WTC11 (cell line): ENCODE measurements at regions of chr17 and their contacts with region 1.

Region 1: DNA sequence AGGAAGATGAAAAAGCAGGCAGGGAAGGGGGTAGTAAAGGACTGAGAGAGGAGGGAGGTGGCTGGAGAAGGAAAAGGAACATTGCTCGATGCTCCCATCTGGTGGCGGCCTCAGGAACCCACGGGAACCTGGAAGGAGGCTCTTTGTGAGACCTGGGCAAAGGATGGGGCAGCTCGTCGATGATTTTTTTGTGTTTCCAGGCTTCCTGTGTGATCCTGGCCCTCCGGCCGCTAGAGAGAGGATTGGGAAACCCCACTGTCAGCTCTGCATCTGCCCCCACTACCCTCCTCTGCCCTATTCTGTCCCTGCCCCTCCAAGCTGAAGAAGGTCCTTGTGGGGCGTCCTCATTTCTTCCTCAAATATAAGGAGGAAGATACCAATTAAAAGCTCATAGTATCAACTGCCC is 6.6 kb downstream of the WFIKKN2 start:
- DNase-seq: peak; percentile 83
- ATAC-seq: peak; percentile 90
- H3K4me3 Mint-ChIP-seq: no peak overlapping the region
- H3K27ac Mint-ChIP-seq: no peak overlapping the region
- H3K4me1 Mint-ChIP-seq: peaks cover 9% of the 10 kb centered on the region
- H3K27me3 Mint-ChIP-seq: no peaks in the 10 kb centered on the region
- CTCF ChIP-seq: 0 out of 2 replicates have a peak, but pooled peaks have one; percentile 44

Region 2: GRCh38 chr17:50765454-50766221 is 76.3 kb before region 1 on chr17:
- CTCF ChIA-PET with region 1: interaction called, 13 read pairs
- POLR2A ChIA-PET with region 1: no interaction called
- DNase-seq: no peak
- ATAC-seq: no peak
- H3K4me3 Mint-ChIP-seq: no peak overlapping the region
- H3K27ac Mint-ChIP-seq: peak overlapping the region; percentile 33; the same call in 1 of the 2 replicates
- H3K4me1 Mint-ChIP-seq: peaks cover 16% of the 10 kb centered on the region
- H3K27me3 Mint-ChIP-seq: no peaks in the 10 kb centered on the region; the same call in 1 of the 2 replicates
- CTCF ChIP-seq: no peak

Region 3: GRCh38 chr17:50806141-50806643 is 35.8 kb before region 1 on chr17:
- CTCF ChIA-PET with region 1: interaction called, 27 read pairs
- POLR2A ChIA-PET with region 1: no interaction called
- DNase-seq: peak; percentile 56
- ATAC-seq: peak; percentile 81
- H3K4me3 Mint-ChIP-seq: no peak overlapping the region
- H3K27ac Mint-ChIP-seq: no peak overlapping the region
- H3K4me1 Mint-ChIP-seq: no peaks in the 10 kb centered on the region
- H3K27me3 Mint-ChIP-seq: no peaks in the 10 kb centered on the region
- CTCF ChIP-seq: peak; percentile 43; the same call in 1 of the 2 replicates

Region 4: GRCh38 chr17:50828508-50829170 is 13.3 kb before region 1 on chr17:
- CTCF ChIA-PET with region 1: interaction called, 18 read pairs
- POLR2A ChIA-PET with region 1: no interaction called
- DNase-seq: no peak
- ATAC-seq: no peak
- H3K4me3 Mint-ChIP-seq: no peak overlapping the region
- H3K27ac Mint-ChIP-seq: peak overlapping the region; percentile 72; the same call in 1 of the 2 replicates
- H3K4me1 Mint-ChIP-seq: peaks cover 39% of the 10 kb centered on the region
- H3K27me3 Mint-ChIP-seq: no peaks in the 10 kb centered on the region
- CTCF ChIP-seq: no peak

Region 5: GRCh38 chr17:50949989-50950881 is 108.3 kb after region 1 on chr17:
- CTCF ChIA-PET with region 1: interaction called, 16 read pairs
- POLR2A ChIA-PET with region 1: interaction called, 3 read pairs
- DNase-seq: peak; percentile 80
- ATAC-seq: peak; percentile 79
- H3K4me3 Mint-ChIP-seq: peak overlapping the region; percentile 14; the same call in 1 of the 2 replicates
- H3K27ac Mint-ChIP-seq: peak overlapping the region; percentile 58; the same call in 1 of the 2 replicates
- H3K4me1 Mint-ChIP-seq: peaks cover 64% of the 10 kb centered on the region
- H3K27me3 Mint-ChIP-seq: no peaks in the 10 kb centered on the region
- CTCF ChIP-seq: peak; percentile 53